Heart right ventricle (tissue), 16 donors: ENCODE measurements at regions of chr4 and their contacts with region 1.

Region 1: DNA sequence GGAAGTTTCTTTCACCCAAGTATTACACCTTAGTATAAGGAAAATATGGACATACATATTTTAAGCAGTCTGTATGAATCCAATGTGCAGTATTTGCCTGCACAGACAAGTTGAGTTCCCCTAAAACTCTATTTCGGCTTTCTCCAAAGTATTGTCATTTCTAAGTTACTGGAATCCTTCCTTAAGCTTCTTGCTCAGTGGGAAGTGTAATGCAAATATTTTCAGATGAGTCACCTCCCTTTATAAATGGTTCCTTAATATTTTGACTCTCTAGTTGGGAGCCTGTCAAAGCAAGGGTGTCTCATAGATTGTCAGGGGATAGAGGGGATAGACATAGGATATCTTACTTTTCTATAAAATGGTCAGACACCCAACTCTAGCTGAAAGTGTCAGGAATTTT is 178.6 kb downstream of the NAA11 start:
- DNase-seq: no peak
- ATAC-seq: no peak
- H3K4me3 ChIP-seq: no peak overlapping the region
- H3K27ac ChIP-seq: no peak overlapping the region
- H3K4me1 ChIP-seq: no peaks in the 10 kb centered on the region
- H3K27me3 ChIP-seq: no peaks in the 10 kb centered on the region
- CTCF ChIP-seq: no peak

Region 2: GRCh38 chr4:78691971-78692821 is 455.1 kb before region 1 on chr4:
- intact Hi-C with region 1: no loop called
- DNase-seq: peak in 1 of 2 donors; percentile 33
- ATAC-seq: peak; percentile 81 to 96 (median 88)
- H3K4me3 ChIP-seq: no peak overlapping the region
- H3K27ac ChIP-seq: peak overlapping the region in 8 of 10 donors; percentile 15 to 61 (median 42)
- H3K4me1 ChIP-seq: peaks cover 2 to 39% (median 18%) of the 10 kb centered on the region in 9 donors
- H3K27me3 ChIP-seq: no peaks in the 10 kb centered on the region
- CTCF ChIP-seq: no peak

Region 3: DNA sequence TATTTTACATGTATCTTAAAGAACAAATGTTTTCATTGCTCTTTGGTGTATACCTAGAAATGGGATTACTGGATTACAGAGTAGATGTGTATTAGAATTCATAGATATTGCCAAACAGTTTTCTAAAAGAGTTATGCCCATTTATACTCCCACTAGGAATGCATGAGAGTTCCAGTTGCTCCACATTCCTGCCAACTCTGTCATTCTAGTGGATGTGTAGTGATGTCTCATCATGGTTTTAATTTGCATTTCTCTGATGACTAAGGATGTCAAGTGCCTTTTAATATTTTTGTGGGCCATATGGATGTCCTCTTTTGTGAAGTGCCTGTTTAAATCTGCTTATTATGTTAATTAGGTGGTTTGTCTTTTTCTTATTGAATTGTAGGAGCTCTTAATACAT is 436.7 kb before region 1 on chr4:
- intact Hi-C with region 1: no loop called
- DNase-seq: no peak
- ATAC-seq: no peak
- H3K4me3 ChIP-seq: no peak overlapping the region
- H3K27ac ChIP-seq: no peak overlapping the region
- H3K4me1 ChIP-seq: peaks cover 0 to 5% (median 0%) of the 10 kb centered on the region in 9 donors
- H3K27me3 ChIP-seq: no peaks in the 10 kb centered on the region
- CTCF ChIP-seq: no peak

Region 4: DNA sequence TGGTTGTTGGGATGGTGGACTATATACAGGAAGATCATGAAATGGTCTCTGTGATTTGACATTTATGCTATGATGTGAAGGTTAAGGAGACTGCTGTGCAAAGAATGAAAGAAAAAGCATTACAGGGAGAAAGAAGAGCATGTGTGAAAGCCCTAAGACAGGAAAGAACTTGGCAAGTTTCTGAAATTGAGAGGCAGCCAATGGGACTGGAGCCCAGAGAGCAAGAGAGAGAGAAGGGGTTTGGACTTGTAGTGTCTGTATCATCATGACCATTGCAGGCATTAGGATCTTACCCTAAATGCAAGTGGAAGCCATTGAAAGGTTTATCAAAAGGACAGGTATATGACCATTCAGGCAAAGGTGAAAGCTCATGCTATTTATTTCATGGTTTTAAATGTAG is 31.5 kb after region 1 on chr4:
- intact Hi-C with region 1: loop called in 1 of 10 experiments (anchors 1 kb)
- DNase-seq: peak in 1 of 2 donors; percentile 60
- ATAC-seq: peak in 6 of 8 donors; percentile 49 to 76 (median 60)
- H3K4me3 ChIP-seq: no peak overlapping the region
- H3K27ac ChIP-seq: no peak overlapping the region
- H3K4me1 ChIP-seq: peaks cover 0 to 16% (median 6%) of the 10 kb centered on the region in 9 donors
- H3K27me3 ChIP-seq: no peaks in the 10 kb centered on the region
- CTCF ChIP-seq: no peak